A549 (cell line): ENCODE measurements at regions of chr15 and their contacts with region 1.

Region 1: DNA sequence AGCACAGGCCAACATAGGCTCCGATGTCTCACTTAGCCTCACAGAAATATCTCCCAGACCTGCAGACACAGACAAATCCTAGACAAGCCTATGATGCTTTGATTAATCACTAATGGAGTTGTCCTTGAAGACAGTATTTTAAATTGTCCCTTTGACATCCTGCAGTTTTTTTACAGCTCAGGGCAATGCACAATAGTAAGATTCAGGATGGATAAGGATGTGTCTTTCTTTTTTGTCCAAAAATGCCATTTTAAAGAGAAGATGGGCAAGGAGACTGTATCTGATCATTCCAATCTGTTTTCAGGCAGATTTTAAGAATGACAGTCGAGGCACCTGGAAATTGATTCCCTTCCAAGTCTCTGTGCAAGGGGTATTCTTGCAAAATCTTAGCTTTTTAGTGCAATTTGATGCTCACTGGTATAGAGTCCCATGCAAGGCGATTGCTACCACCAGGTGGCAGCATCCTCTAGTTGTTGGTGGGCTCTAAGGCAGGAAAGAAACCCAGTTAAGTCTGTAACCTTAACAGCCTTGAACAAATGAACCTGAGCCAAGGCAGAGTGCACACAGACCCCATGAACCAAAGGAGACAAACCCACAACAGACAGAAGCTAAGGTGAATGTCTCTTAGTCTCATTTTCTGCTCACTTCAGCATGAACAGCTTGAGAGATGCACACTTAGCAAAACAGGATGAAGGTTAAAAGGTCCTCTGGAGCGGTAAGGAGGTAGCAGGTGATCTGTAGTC is 51.2 kb upstream of the MINAR1 start:
- DNase-seq: peak; percentile 70 to 79
- ATAC-seq: peak; percentile 97 to 100
- H3K4me3 ChIP-seq: no peak overlapping the region
- H3K27ac ChIP-seq: no peak overlapping the region
- H3K4me1 ChIP-seq: no peaks in the 10 kb centered on the region
- CTCF ChIP-seq: peak; percentile 98
- EP300 ChIP-seq: no peak
- POLR2A ChIP-seq: no peak
- RAD21 ChIP-seq: peak; percentile 96

Region 2: GRCh38 chr15:79357566-79357965 is 23.4 kb before region 1 on chr15:
- CTCF ChIA-PET with region 1: interaction called, 15 read pairs
- POLR2A ChIA-PET with region 1: no interaction called
- DNase-seq: no peak
- ATAC-seq: no peak
- H3K4me3 ChIP-seq: no peak overlapping the region
- H3K27ac ChIP-seq: no peak overlapping the region
- H3K4me1 ChIP-seq: no peaks in the 10 kb centered on the region
- CTCF ChIP-seq: no peak
- EP300 ChIP-seq: no peak
- POLR2A ChIP-seq: no peak
- RAD21 ChIP-seq: no peak

Region 3: DNA sequence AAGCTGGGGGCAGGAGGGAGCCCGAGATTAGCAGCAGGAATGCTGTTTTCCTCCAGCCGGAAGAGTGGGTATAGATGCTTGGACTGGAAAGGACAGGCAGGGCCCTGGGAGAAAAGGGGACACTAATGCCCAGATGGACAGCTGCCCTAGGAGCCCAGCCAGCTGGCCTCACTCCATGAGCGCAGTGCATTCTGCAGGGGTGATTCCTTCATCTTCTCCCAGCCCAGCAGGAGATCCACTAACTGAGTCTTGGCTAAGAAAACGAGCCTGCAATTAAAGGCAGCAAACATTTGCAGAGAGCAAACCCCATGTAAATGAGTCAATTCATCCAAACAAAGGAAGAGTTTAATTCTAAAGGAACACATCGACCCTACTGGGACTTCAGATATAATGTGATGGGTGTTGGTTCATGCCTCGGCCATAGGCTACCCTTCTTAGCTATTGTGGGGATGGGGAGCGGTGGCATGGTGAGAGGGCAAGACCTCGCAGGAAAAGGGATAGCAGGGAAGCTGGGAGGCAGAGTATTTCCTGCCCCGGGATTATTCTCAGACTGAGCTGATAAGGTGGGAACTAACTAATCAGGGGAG is 37.9 kb after region 1 on chr15:
- CTCF ChIA-PET with region 1: interaction called, 37 read pairs
- POLR2A ChIA-PET with region 1: no interaction called
- DNase-seq: no peak
- ATAC-seq: no peak
- H3K4me3 ChIP-seq: no peak overlapping the region
- H3K27ac ChIP-seq: no peak overlapping the region
- H3K4me1 ChIP-seq: no peaks in the 10 kb centered on the region
- CTCF ChIP-seq: no peak
- EP300 ChIP-seq: no peak
- POLR2A ChIP-seq: no peak
- RAD21 ChIP-seq: no peak

Region 4: GRCh38 chr15:79549196-79549595 is 168.3 kb after region 1 on chr15:
- CTCF ChIA-PET with region 1: interaction called, 10 read pairs
- POLR2A ChIA-PET with region 1: no interaction called
- DNase-seq: peak in 1 of 2 experiments; percentile 19
- ATAC-seq: 0 out of 6 replicates have a peak, but pooled peaks of 1 of the 2 experiments have one; percentile 37
- H3K4me3 ChIP-seq: no peak overlapping the region
- H3K27ac ChIP-seq: no peak overlapping the region
- H3K4me1 ChIP-seq: peaks cover 2% of the 10 kb centered on the region; the same call in 1 of the 3 replicates
- CTCF ChIP-seq: no peak
- EP300 ChIP-seq: peak in 1 of 2 experiments; percentile 23; a peak in 1 of 5 replicates
- POLR2A ChIP-seq: no peak
- RAD21 ChIP-seq: no peak

Region 5: GRCh38 chr15:79844221-79844620 is 463.3 kb after region 1 on chr15:
- CTCF ChIA-PET with region 1: interaction called, 405 read pairs
- POLR2A ChIA-PET with region 1: no interaction called
- DNase-seq: no peak
- ATAC-seq: no peak
- H3K4me3 ChIP-seq: no peak overlapping the region
- H3K27ac ChIP-seq: no peak overlapping the region
- H3K4me1 ChIP-seq: no peaks in the 10 kb centered on the region
- CTCF ChIP-seq: no peak
- EP300 ChIP-seq: no peak
- POLR2A ChIP-seq: no peak
- RAD21 ChIP-seq: no peak

Region 6: DNA sequence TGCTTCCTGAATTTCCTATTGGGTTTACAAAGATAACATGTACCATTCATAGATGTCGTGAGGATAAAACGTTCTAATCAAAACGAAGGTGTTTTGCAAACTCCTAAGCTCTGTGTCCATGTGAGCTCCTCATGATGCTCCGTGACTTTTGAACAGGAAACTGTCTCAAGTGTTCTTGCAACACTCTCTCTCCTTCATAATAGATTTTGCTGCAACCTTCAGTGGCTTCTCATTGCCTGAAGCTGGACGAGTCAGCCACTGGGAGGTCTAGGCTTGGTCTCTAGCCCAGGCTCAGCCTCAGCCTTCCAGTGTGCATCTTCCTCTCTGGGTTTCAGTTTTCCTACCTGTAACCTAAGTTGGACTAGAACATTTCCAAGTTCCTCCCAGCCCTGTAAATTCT is 608.8 kb after region 1 on chr15:
- CTCF ChIA-PET with region 1: interaction called, 32 read pairs
- POLR2A ChIA-PET with region 1: no interaction called
- DNase-seq: no peak
- ATAC-seq: peak; percentile 41 to 53; a peak in 4 of 6 replicates
- H3K4me3 ChIP-seq: no peak overlapping the region
- H3K27ac ChIP-seq: peak overlapping the region in 1 of 2 experiments; percentile 5; a peak in 1 of 6 replicates
- H3K4me1 ChIP-seq: peaks cover 3% of the 10 kb centered on the region; the same call in 2 of the 3 replicates
- CTCF ChIP-seq: no peak
- EP300 ChIP-seq: no peak
- POLR2A ChIP-seq: no peak
- RAD21 ChIP-seq: no peak